Panc1 (cell line): ENCODE measurements at regions of chr18 and their contacts with region 1.

Region 1: GRCh38 chr18:3645384-3646156 is 195.6 kb downstream of the TGIF1 start:
- DNase-seq: no peak
- ATAC-seq: no peak
- H3K4me3 ChIP-seq: no peak overlapping the region
- H3K27ac ChIP-seq: peak overlapping the region; percentile 100
- H3K4me1 ChIP-seq: peaks cover 31% of the 10 kb centered on the region
- H3K27me3 ChIP-seq: no peaks in the 10 kb centered on the region
- CTCF ChIP-seq: no peak

Region 2: DNA sequence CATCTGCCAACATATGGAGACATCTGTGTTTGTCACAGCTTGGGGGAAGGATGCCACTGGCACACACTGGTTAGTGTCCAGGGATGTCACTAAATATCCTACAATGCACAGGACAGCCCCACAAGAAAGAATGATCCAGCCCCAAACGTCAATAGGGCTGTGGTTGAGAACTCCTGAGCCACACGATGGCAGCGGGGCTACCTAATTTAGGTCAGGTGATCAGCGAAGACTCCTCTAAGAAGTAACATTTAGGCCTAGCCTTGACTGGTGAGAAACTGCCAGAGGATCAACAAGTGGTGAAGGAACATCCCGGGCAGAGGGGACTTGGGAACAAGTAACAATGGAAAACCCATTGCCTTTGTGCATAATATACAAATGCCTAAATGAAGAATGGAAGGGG is 200.6 kb before region 1 on chr18:
- CTCF ChIA-PET with region 1: no interaction called
- POLR2A ChIA-PET with region 1: no interaction called
- in situ Hi-C with region 1: no loop called
- intact Hi-C with region 1: no loop called
- DNase-seq: no peak
- ATAC-seq: no peak
- H3K4me3 ChIP-seq: no peak overlapping the region
- H3K27ac ChIP-seq: peak overlapping the region; percentile 80
- H3K4me1 ChIP-seq: peaks cover 56% of the 10 kb centered on the region
- H3K27me3 ChIP-seq: no peaks in the 10 kb centered on the region
- CTCF ChIP-seq: no peak

Region 3: GRCh38 chr18:3566851-3567250 is 78.7 kb before region 1 on chr18:
- CTCF ChIA-PET with region 1: no interaction called
- POLR2A ChIA-PET with region 1: interaction called, 11 read pairs
- in situ Hi-C with region 1: no loop called
- intact Hi-C with region 1: no loop called
- DNase-seq: no peak
- ATAC-seq: no peak
- H3K4me3 ChIP-seq: no peak overlapping the region
- H3K27ac ChIP-seq: peak overlapping the region; percentile 20; the same call in 1 of the 2 replicates
- H3K4me1 ChIP-seq: no peaks in the 10 kb centered on the region
- H3K27me3 ChIP-seq: no peaks in the 10 kb centered on the region
- CTCF ChIP-seq: no peak

Region 4: GRCh38 chr18:3631887-3632286 is 13.7 kb before region 1 on chr18:
- CTCF ChIA-PET with region 1: no interaction called
- POLR2A ChIA-PET with region 1: interaction called, 14 read pairs
- in situ Hi-C with region 1: no loop called
- intact Hi-C with region 1: no loop called
- DNase-seq: no peak
- ATAC-seq: no peak
- H3K4me3 ChIP-seq: no peak overlapping the region
- H3K27ac ChIP-seq: peak overlapping the region; percentile 72; the same call in 1 of the 2 replicates
- H3K4me1 ChIP-seq: no peaks in the 10 kb centered on the region
- H3K27me3 ChIP-seq: no peaks in the 10 kb centered on the region
- CTCF ChIP-seq: no peak